Panc1 (cell line): ENCODE measurements at regions of chr14 and their contacts with region 1.

Region 1: DNA sequence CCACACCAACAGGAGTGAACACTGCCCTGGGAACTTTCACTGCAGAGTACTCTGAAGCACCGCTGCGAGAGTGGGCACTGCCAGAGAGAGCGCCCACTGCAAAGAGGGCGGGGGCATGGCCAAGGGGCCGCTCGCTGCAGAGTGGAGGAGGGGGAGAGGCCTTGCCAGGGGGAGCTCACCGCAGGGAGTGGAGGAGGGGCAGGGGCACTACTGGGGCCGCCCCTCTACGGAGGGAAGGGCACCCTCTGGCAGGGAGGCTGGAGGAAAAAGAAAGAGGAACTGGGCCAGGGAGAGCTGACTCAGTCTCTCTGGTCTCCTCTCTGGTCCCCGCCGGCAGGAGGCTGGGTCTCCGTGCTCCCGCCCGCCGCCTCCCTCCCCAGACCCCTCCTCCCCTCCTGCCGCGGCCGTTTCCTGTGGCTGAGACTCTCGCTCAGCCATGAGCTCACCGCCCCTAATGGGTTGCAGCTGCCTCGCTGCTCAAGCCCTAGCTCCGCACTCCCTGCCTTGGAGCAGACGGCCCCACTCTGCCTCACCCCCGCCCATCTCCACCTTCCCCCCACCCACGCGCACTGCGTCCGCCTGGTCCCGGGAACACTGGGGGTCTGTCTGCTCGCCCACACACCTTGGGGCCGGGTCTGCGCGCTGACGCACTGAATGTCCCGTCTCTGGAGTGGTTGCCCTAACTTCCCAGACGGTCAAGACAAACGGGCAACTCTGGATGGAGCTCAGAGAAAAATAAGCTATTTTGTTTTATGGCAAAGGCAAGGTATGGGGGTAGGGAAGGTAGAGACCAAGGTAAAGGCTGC is 1.3 kb downstream of the ARHGEF40 start:
- DNase-seq: no peak
- ATAC-seq: peak; percentile 59
- H3K4me3 ChIP-seq: peak overlapping the region; percentile 54 to 65
- H3K27ac ChIP-seq: peak overlapping the region; percentile 63
- H3K4me1 ChIP-seq: peaks cover 7% of the 10 kb centered on the region
- H3K27me3 ChIP-seq: no peaks in the 10 kb centered on the region
- CTCF ChIP-seq: no peak

Region 2: DNA sequence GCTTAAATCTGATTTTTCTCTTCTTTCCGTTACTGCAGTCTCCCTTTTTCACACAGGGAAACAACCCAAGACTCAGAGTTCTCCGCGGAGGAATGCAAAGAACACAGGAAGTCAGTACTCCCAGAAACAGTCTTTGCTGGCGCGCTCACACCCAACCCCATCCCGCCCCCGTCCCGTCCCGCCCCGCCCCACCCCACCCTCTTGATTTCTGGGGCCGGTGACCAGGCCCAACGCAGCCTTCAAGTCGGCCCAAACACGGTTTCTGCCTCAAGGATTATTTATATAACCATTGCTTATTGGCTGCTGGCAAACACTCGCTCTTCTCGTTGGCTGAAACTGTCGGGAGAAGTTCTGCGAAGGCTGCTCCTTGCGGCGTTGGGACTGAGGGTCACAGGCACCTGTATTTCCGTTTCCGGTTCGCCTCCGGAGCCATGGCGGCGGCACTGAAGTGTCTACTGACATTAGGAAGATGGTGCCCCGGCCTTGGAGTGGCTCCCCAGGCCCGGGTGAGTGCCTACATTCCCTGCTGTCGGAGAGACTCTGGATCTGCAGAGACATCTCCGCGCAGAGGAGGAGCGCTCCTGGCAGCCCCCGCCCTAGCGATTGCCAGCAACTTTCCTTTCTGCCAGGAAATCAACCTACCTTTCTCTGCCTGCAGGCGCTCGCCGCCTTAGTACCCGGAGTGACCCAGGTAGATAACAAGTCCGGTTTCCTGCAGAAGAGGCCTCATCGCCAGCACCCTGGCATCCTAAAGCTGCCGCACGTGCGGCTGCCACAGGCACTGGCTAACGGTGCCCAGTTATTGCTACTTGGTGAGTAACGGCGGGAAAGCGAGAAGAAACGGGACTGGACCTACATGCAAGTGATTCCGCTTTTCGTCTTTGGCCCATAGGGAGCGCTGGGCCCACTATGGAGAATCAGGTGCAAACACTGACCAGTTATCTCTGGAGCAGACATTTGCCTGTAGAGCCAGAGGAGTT is 81.6 kb before region 1 on chr14 and contains the start of gene METTL17:
- CTCF ChIA-PET with region 1: interaction called, 12 read pairs
- POLR2A ChIA-PET with region 1: no interaction called
- in situ Hi-C with region 1: no loop called
- intact Hi-C with region 1: no loop called
- DNase-seq: peak; percentile 88
- ATAC-seq: peak; percentile 98
- H3K4me3 ChIP-seq: peak within 1 kb of the TSS; percentile 94 to 97
- H3K27ac ChIP-seq: peak within 1 kb of the TSS; percentile 93
- H3K4me1 ChIP-seq: peaks cover 10% of the 10 kb centered on the region
- H3K27me3 ChIP-seq: no peaks in the 10 kb centered on the region
- CTCF ChIP-seq: peak; percentile 36; the same call in 1 of the 2 replicates
- total RNA-seq, gene METTL17: 39.6 TPM

Region 3: DNA sequence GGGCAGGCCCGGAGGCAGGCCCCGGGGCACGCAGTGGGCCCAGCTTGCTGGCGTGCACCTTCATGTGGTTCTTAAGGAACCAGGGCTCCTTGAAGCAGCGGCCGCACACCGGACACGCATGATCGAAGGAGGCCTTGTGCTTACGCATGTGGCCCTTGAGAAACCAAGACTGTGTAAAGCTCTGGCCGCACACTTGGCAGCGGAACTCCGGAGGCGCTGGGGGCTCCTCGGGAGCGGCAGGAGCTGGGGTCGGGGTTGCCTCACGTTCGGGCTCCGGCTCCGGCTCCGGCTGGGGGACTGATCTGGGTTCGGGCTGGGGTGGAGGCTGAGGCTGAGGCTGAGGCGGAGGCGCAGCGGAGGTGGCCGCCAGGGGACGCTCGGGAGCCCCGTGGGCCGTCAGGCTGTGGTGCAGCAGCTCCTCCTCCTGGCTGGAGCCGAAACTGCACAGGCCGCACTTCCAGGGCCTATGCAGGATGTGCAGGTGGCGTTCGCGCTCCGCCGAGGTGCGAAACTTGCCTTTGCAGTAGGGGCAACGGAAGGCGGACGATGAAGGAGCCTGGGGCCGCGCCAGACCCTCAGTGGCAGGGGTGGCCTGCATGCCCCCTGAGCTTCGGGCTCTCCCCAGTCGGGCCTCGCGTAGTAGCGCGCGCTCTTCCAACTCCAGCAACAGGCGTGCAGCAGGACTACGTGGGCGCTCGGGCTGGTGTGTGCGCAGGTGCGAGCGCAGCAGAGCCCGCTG is 21.0 kb after region 1 on chr14:
- CTCF ChIA-PET with region 1: interaction called, 10 read pairs
- POLR2A ChIA-PET with region 1: no interaction called
- in situ Hi-C with region 1: no loop called
- intact Hi-C with region 1: loop called (anchors 1 kb)
- DNase-seq: peak; percentile 82
- ATAC-seq: peak; percentile 83
- H3K4me3 ChIP-seq: no peak overlapping the region
- H3K27ac ChIP-seq: no peak overlapping the region
- H3K4me1 ChIP-seq: peaks cover 4% of the 10 kb centered on the region; the same call in 1 of the 2 replicates
- H3K27me3 ChIP-seq: no peaks in the 10 kb centered on the region
- CTCF ChIP-seq: peak; percentile 100

Region 4: DNA sequence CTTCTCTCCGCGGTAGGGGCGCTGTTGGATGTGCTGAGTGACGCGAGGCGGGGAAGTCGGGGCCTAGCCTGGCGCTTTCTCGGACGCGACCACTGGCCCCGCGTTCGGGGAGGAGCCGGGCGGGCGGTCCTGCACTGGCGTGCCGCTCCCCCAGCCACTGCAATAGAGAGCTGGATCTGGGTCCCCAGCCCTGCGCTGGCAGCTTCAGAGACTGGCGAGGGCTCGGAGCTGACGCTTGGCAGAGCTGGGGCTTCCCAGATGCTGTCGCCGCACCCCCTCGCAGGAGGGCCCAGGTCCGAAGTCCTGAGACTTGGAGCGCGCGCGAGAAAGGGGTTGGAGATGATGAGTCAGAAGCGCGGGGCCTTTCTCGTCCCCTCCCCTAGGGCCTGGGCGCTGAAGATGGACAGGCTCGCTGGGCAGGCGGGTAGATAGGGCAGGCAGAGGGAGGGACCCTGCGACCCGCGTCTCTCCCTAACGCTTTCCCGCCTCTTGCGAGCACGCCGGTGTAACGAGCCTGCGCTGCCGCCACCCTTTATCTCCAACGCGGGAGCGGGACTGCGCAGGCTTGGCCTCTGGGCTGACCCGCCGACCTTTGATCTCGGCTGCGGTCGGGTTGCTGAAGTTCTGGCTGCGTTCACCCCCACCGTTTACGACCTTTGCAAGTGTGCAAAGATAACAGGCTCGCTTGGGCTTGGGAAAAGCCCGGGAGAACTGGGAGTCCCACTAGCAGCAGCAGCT is 32.5 kb after region 1 on chr14:
- CTCF ChIA-PET with region 1: interaction called, 14 read pairs
- POLR2A ChIA-PET with region 1: no interaction called
- in situ Hi-C with region 1: no loop called
- intact Hi-C with region 1: loop called (anchors 5 kb)
- DNase-seq: peak; percentile 78
- ATAC-seq: peak; percentile 95
- H3K4me3 ChIP-seq: peak overlapping the region; percentile 65 to 77
- H3K27ac ChIP-seq: peak overlapping the region; percentile 92
- H3K4me1 ChIP-seq: peaks cover 17% of the 10 kb centered on the region
- H3K27me3 ChIP-seq: no peaks in the 10 kb centered on the region
- CTCF ChIP-seq: peak; percentile 72

Region 5: GRCh38 chr14:21121106-21121505 is 49.7 kb after region 1 on chr14:
- CTCF ChIA-PET with region 1: no interaction called
- POLR2A ChIA-PET with region 1: no interaction called
- in situ Hi-C with region 1: no loop called
- intact Hi-C with region 1: no loop called
- DNase-seq: no peak
- ATAC-seq: no peak
- H3K4me3 ChIP-seq: no peak overlapping the region
- H3K27ac ChIP-seq: no peak overlapping the region
- H3K4me1 ChIP-seq: no peaks in the 10 kb centered on the region
- H3K27me3 ChIP-seq: 0 out of 2 replicates have a peak, but pooled peaks cover 2% of the 10 kb centered on the region
- CTCF ChIP-seq: no peak

Region 6: DNA sequence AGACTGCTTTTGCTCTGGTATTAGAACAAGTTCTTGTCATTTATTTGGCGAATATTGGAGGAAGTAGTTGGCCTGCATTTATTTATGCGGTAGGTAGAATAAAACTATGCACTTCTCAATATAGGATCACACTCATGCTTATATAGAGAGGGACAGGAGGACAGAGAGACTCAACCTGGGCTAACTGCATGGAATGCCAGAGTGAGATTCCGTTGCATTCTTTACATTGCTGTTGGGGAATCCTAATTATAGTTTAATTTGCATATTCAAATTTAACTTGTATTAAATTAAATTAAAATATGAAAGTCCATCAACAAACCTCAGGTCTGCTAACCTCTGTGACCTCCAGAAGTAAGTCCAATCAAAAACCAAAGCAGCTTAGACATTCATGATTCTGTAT is 481.8 kb after region 1 on chr14:
- CTCF ChIA-PET with region 1: no interaction called
- POLR2A ChIA-PET with region 1: no interaction called
- in situ Hi-C with region 1: no loop called
- intact Hi-C with region 1: no loop called
- DNase-seq: no peak
- ATAC-seq: no peak
- H3K4me3 ChIP-seq: no peak overlapping the region
- H3K27ac ChIP-seq: no peak overlapping the region
- H3K4me1 ChIP-seq: no peaks in the 10 kb centered on the region
- H3K27me3 ChIP-seq: no peaks in the 10 kb centered on the region
- CTCF ChIP-seq: no peak